Calu3 (cell line): ENCODE measurements at regions of chrX and their contacts with region 1.

Region 1: DNA sequence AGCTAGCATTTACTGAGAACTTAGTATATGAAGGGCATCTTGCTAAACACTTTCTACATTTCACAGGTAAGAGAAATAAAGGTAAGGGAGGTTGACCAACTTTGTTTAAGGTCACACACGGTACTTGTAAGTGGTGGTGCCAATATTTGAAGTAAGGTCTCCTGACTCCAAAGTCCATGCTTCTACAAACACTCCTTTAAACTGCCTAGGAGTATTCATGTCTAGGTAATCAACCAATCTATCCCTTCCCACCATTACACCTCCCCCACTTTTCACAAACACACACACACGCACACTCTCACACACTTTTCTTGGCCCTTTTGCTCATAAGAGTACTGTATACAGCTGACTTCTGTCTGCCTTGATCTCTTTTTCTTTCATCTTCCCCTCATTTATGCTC is 7.1 kb downstream of the BEX1 start:
- DNase-seq: no peak
- H3K4me3 Mint-ChIP-seq: no peak overlapping the region
- H3K27ac Mint-ChIP-seq: no peak overlapping the region
- H3K4me1 Mint-ChIP-seq: peaks cover 16% of the 10 kb centered on the region
- H3K27me3 Mint-ChIP-seq: peaks cover 34% of the 10 kb centered on the region
- CTCF ChIP-seq: no peak

Region 2: DNA sequence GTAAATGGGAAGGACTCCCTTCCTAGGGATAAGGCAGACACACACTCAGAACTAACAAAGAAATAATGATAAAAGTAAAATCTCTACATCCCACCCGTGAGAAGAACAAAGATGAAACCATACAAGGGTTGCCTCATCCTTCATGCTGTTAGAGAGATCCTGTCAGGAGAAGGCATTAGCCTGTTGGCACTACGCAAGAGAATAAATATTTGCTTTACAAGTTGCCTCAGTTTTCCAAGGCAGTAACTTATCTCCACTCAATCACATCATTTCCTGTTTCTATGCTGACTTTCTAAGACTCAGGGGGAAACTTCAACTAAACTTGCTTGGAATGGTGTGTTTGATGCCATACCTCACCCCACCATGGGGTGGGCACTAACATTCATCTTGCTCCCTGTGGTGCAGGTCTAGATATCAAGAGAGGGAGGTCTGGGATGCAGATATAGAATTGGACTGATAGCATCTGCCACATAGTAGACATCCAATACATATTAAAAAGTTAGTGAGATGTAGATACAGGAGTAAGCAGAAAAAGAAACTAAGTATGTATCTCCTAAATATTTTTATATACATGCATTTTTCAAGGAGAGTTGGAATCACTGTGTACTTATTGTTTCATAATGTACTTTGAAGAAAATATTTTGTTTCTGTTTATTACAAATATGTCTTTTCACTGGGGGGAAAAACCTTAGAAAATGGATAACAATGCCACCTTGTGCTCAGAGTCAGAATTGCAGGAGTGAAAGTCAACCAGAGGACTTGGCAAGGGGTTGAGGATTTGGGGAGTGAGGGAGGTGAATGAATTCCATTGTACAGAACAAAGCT is 100.8 kb after region 1 on chrX:
- CTCF ChIA-PET with region 1: no interaction called
- intact Hi-C with region 1: loop called (anchors 5 kb)
- DNase-seq: peak; percentile 41
- H3K4me3 Mint-ChIP-seq: no peak overlapping the region
- H3K27ac Mint-ChIP-seq: no peak overlapping the region
- H3K4me1 Mint-ChIP-seq: peaks cover 19% of the 10 kb centered on the region
- H3K27me3 Mint-ChIP-seq: peaks cover 10% of the 10 kb centered on the region
- CTCF ChIP-seq: peak; percentile 69